HepG2 (cell line): ENCODE measurements at regions of chr5 and their contacts with region 1.

Region 1: DNA sequence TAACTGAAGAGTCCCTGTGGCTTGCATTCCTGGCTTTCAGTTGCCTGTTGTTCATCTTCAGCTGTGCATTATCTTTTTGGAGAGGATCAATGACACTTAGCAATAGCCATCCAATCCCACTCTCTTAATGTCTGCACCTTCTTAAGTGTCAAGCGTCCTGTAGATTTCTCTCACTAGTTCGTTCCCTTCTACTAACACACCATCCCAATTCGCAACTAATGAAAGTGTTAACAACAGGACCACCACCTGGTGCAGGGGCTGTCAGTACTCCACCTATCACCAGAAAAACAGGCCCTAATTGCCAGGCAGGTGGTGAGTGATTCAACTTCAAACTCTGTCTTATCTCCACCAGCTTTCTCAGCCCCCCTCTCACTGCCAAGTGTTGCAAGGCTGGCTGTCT is 169.4 kb upstream of the EFNA5 start:
- DNase-seq: no peak
- ATAC-seq: no peak
- H3K4me3 ChIP-seq: no peak overlapping the region
- H3K27ac ChIP-seq: no peak overlapping the region
- H3K4me1 ChIP-seq: no peaks in the 10 kb centered on the region
- H3K27me3 ChIP-seq: no peaks in the 10 kb centered on the region
- CTCF ChIP-seq: no peak
- EP300 ChIP-seq: no peak
- POLR2A ChIP-seq: no peak
- RAD21 ChIP-seq: no peak

Region 2: DNA sequence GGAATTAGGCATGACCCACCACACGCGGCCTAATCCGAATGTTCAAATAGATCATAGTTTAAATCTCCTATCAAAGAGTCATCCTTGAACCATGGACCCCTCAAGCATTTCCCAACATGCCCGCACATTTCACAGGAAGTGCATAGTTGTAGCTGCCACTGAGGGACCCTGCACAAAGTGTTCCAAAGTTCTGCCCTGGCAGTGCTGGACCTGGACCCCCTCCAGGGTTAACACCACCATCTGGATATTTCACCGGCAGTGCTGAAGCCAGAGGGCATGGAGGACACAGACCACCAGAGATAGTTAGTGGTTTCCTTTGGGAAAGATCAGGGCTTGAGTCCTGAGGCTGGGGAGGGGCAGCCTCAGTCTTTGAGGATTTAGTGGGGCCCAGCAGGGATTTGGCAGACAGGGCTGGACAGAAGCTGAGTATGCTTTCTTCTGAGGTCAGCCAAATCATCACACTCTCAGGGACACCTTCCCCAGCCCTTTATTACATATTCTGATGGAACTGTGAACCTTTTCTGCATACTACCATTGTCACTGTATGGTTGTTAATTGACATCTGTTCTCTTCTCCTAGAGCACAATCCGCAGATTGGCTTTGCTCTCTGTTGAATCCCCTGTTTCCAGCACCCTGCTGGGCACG is 25.9 kb before region 1 on chr5:
- CTCF ChIA-PET with region 1: no interaction called
- POLR2A ChIA-PET with region 1: no interaction called
- in situ Hi-C with region 1: no loop called
- intact Hi-C with region 1: loop called (anchors 1 kb)
- DNase-seq: peak; percentile 6
- ATAC-seq: peak; percentile 71
- H3K4me3 ChIP-seq: no peak overlapping the region
- H3K27ac ChIP-seq: no peak overlapping the region
- H3K4me1 ChIP-seq: no peaks in the 10 kb centered on the region
- H3K27me3 ChIP-seq: peaks cover 0 to 1% of the 10 kb centered on the region in 2 experiments; a peak in 2 of 5 replicates
- CTCF ChIP-seq: no peak
- EP300 ChIP-seq: no peak
- POLR2A ChIP-seq: no peak
- RAD21 ChIP-seq: no peak